ENCODE measurements at regions of chr3 and their contacts with region 1.

Region 1: DNA sequence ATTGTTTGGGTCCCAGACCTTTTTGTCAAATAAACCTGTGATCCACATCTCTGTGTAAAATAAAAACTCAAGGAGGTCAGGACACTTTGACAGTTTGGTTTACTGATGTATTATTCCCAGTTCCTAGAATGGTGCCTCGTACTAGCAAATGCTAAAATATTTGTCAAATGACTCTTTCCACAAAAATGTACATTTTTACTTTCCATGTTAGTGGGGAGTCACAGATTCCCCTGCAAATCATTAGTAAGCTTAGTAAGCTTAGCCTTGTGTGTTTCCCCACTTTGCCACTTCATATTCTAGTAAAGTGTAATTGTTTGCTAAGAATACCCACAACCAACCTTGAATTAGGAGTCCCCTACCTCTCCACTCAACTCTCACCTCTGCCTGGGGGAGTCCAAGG is 2.4 kb upstream of the MAGI1 start:
- DNase-seq: no peak

Region 2: GRCh38 chr3:66110840-66111239 is 69.7 kb after region 1 on chr3:
- in situ Hi-C with region 1: loop called (anchors 5 kb)
- DNase-seq: peak; percentile 22